PC-9 (cell line): ENCODE measurements at regions of chr10 and their contacts with region 1.

Region 1: GRCh38 chr10:86585037-86585725 is 63.6 kb upstream of the WAPL start:
- DNase-seq: peak; percentile 49 to 60
- H3K4me3 ChIP-seq: no peak overlapping the region
- H3K27ac ChIP-seq: no peak overlapping the region
- H3K4me1 ChIP-seq: no peaks in the 10 kb centered on the region
- H3K27me3 ChIP-seq: no peaks in the 10 kb centered on the region
- CTCF ChIP-seq: peak; percentile 91

Region 2: DNA sequence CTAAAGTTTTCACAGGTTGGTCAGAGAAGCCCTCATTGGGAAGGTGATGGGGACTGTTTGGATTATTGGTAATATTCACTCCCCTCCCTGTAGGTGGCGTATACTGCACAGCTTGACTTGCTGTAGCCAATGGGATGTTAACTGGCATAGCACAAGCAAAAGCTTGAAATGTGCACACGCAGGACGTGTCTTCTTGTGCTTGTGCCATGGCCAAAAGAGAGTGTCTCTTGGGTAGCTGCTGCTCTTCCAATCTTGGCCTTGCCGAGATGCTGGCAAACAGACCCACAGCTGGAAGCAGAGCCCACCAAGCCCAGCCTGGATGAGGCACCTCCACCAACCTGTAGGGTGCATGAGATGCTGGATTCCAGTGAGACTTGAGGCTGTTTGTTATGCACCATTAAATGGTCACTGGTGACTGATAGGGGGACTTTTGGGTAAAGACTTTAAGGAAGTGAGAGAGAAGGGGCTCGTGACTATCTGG is 484.6 kb before region 1 on chr10:
- CTCF ChIA-PET with region 1: no interaction called
- POLR2A ChIA-PET with region 1: no interaction called
- intact Hi-C with region 1: loop called (anchors 10 kb)
- DNase-seq: no peak
- H3K4me3 ChIP-seq: no peak overlapping the region
- H3K27ac ChIP-seq: no peak overlapping the region
- H3K4me1 ChIP-seq: no peaks in the 10 kb centered on the region
- H3K27me3 ChIP-seq: no peaks in the 10 kb centered on the region
- CTCF ChIP-seq: peak; percentile 50

Region 3: DNA sequence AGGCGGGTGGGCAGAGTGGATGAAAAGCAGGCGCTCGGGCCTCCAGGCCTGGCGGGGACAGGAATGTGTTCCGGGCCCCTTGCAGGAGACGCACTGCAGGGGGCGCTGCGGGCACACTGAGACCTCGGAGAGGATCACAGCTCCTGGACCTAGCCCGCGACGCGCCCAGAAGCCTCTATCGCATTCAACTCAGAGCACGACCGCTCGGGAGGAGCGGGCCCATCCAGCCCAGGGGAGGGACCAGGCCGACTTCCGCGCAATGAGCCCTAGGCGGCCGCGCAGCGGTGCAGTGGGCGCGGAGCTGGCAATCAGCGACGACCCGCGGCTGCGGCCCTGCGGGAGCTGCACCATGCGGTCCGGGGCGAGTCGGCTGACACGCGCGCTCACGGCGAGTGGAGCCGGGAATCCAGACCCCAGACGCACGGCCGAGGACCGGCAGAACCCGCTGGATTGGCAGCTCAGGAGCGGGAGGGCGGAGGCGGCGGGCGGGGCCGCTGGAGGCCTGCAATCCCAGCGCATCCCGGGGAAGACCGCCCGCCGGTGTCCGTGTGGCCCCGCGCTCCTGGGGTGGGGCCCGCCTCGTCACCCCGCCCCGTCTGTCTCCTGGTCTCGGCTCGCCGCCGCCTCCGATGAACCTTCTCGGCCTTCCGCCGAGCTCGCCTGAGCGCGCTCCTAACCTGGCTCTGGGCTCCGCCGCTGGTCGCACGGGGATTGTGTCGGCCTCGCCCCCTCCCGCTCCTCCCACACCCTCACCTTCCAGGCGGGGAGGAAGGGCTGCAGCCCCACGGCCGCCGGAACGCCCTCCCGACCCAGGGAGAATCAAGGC is 185.1 kb before region 1 on chr10:
- CTCF ChIA-PET with region 1: interaction called, 6 read pairs
- POLR2A ChIA-PET with region 1: no interaction called
- intact Hi-C with region 1: loop called (anchors 1 kb)
- DNase-seq: peak; percentile 81 to 86
- H3K4me3 ChIP-seq: peak overlapping the region; percentile 66
- H3K27ac ChIP-seq: no peak overlapping the region
- H3K4me1 ChIP-seq: no peaks in the 10 kb centered on the region
- H3K27me3 ChIP-seq: no peaks in the 10 kb centered on the region
- CTCF ChIP-seq: peak; percentile 75

Region 4: GRCh38 chr10:86521678-86522509 is 63.3 kb before region 1 on chr10 and contains the start of gene WAPL:
- CTCF ChIA-PET with region 1: interaction called, 6 read pairs
- POLR2A ChIA-PET with region 1: no interaction called
- intact Hi-C with region 1: loop called (anchors 2 kb)
- DNase-seq: peak; percentile 74 to 92
- H3K4me3 ChIP-seq: peak within 1 kb of the TSS; percentile 79
- H3K27ac ChIP-seq: peak within 1 kb of the TSS; percentile 56
- H3K4me1 ChIP-seq: peaks cover 28% of the 10 kb centered on the region
- H3K27me3 ChIP-seq: no peaks in the 10 kb centered on the region
- CTCF ChIP-seq: no peak
- total RNA-seq, gene WAPL: 17.9 and 20.9 TPM in 2 replicates